Right ventricle myocardium superior (tissue), 1 donor: ENCODE measurements at regions of chr18 and their contacts with region 1.

Region 1: GRCh38 chr18:22563098-22563707 is 145.5 kb upstream of the CTAGE1 start:
- DNase-seq: no peak
- ATAC-seq: peak; percentile 66

Region 2: DNA sequence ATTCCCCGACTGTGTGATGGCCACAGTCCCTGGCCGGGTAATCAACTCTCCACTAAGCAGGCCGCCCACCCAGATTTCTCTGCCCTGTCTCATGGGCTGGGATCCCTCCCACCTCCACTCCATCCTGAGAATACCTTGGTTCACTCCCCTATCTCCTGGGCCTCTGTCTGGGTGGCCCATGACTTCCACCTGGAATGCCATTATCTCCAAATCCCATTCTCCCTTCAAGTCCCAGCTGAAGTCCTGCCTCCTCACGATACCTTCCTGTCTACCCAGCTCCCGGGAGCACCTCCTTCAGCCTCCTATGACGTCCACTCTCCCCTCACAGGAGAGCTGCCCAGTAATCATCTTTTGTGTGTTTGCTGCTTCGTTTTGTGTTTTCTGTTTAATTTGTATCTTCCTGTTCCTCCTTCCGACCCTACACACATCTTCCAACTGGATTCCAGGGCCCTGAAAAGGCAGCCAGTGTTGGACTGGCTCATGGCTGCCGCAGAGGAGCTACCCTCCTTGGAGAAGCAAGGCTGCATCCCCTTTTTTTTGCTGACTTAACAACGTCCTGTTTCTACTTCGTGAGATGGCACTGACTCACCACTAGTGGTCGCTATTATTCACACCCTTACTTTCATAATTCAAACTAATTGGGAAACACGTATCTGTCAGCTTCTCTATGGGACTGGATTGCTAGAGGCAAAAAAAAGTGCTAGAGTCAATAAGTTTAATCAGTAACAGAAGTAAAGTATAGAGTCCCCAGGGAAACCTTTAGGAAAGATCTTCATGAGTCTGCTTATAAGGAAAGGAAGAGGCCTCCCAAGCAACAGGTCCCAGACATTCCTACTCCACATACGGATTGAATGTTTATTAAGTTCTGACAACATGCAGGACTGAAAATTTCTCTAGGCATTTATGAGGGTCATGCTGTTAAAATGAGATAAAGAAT is 565.7 kb before region 1 on chr18:
- intact Hi-C with region 1: loop called (anchors 10 kb)
- DNase-seq: no peak
- ATAC-seq: peak; percentile 86

Region 3: DNA sequence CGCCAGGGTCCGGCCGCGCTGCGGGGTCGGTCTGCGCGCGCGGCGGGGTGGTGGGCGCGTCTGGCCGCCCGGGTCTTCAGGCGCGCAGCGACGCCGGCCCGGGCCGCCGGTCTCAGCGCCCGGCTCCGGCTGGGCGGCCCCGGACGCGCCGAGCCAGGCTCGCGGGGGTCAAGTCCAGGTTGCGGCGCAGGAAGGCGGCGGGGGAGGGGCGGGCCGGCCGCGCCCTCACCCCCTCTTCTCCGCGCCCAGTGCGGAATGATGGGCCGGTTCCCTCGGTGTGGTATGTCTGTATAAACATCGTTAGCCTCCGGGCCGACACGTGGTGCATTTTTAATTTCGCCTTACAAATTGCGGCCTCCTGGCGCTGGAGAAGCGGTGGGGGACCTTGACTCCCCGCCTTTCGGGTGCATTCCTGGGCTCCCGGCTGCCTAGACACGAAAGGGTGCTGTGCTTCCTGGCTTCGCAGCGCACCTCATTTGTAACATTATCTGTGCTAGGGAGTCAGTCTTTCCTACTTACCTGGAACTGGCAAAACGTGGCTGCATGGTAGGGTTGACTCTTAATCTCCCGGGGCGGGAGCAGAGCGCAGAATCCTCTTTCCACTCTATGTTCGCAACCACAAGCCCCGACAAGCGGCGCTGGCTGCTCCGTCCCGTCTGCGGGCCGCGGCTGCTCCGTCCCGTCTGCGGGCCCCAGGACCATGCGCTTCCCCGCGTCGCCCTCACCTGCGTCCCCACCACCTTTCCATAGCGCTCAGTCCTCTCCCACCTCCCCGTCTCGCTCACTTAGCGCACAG is 214.5 kb before region 1 on chr18:
- intact Hi-C with region 1: loop called (anchors 2 kb)
- DNase-seq: peak; percentile 88
- ATAC-seq: peak; percentile 81

Region 4: GRCh38 chr18:22471546-22472131 is 91.6 kb before region 1 on chr18:
- intact Hi-C with region 1: loop called (anchors 5 kb)
- DNase-seq: peak; percentile 81
- ATAC-seq: peak; percentile 90